AG04449 (cell line): ENCODE measurements at regions of chr14 and their contacts with region 1.

Region 1: GRCh38 chr14:22986508-22987054 is 4.2 kb upstream of the AJUBA start:
- DNase-seq: peak; percentile 49
- H3K4me3 ChIP-seq: no peak overlapping the region
- CTCF ChIP-seq: peak; percentile 79

Region 2: DNA sequence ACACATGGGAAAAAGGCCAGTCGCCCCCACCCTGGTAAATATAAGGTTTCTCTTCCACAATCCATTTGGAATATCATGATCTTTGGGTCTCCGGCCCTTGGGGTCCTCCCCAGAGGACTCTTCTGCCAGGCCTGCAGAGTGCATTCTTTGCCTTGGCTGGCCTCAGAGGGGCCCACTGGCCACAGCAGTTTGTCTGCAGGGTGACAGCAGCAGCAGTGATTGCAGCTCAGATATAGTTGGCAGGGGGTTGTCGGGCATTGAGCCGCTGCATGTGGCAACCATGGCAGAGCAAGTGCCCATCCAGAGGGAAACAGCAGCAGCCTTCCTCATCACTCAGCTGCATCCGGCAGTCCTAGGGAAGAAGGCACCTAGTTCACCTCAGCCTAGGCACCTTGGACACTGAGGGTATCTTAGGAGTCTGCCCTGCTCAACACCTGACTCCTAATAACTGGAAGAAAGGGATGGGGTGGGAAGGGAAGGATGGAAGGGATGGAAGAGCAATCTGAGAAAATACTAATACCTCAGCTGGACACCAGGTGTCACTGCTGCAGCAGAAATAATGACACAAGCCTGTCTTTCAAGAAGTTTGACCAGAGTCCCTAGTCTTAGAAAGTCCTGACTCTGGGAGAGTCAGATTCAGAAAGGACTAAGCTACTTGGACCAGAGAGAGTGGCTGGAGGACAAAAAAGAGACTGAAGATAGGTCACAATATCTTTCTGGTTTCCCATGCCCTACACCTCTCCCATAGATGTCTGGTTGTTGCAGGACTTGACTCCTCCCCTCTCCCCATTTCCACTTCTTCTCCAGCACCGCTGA is 13.2 kb before region 1 on chr14:
- CTCF ChIA-PET with region 1: interaction called, 241 read pairs
- POLR2A ChIA-PET with region 1: interaction called, 10 read pairs
- DNase-seq: no peak
- H3K4me3 ChIP-seq: no peak overlapping the region
- CTCF ChIP-seq: peak; percentile 52

Region 3: DNA sequence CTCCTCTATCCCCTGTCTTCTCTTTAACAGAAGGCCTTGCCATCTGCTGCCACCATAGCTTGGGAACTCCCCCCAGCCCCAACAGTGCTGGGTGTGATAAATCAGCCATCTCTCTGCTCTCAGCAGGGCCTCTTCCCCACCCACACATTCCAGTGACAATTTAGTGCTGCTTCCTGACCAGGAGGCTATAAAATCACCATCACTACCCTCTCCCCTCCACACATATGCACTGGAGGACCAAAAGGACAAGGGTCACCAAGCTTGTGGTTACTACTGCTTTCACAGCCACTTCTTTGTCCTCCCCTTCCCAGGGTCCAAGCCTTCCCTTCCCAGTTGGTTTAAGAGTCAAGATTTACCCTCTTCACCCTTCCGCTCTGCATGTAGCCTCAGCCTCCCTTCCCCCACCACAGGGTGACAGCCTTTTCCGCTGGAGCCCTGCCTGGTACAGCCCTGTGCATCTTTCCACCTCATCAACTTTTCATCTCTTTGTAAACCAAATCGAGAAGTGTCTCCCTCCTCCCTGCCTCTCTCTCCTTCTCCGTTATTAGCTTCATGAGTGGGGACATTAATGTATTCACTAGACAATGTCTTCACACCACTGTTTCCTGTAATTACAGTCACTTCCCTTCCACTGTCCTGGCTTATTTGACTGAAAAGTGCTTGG is 38.7 kb after region 1 on chr14:
- CTCF ChIA-PET with region 1: interaction called, 17 read pairs
- POLR2A ChIA-PET with region 1: no interaction called
- DNase-seq: no peak
- H3K4me3 ChIP-seq: no peak overlapping the region
- CTCF ChIP-seq: no peak

Region 4: DNA sequence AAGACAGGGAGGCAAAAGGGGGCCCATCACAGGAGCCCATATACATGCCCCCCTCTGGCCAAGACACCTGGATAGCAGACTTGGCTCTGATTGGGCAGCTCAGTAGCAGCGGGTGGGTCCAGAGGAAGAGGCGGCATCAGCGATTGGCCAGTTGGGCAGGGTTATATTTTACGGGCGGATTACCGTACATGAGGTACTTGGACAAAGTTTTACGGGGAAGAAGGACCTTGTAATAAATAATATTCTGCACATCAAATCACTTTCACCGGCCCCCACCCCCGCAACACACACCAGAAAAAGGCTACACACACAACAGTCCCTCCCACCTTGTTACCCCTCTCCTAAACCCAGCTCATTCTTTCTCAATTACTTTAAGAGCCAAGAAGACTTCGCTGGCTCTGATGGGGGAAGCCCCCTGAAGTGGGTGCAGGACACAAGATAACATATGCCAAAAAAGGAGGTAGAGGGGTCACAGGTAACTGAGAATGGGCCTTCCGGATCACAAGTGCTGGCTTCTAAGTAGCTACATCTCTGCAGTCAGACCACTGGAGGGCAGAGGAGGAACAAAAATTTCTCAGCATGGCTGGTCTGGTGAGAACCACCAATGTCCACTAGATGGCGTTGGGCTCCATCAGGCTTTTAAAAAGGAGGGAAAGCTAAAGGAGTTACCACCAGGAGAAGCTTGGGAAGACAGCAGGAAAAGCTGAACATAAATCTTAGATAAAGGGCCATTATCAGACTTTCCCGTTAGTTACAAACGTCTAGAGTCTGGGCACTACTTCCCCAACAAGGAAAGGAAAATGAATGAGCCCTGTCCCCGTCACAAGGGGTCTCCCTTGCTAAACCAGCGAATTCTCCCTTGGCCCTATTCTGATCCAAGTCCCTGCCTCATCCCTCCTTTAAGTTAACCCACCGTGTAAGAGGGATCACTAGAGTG is 82.2 kb after region 1 on chr14:
- CTCF ChIA-PET with region 1: interaction called, 1,423 read pairs
- POLR2A ChIA-PET with region 1: interaction called, 3 read pairs
- DNase-seq: peak; percentile 61
- H3K4me3 ChIP-seq: peak overlapping the region; percentile 39
- CTCF ChIP-seq: peak; percentile 92

Region 5: GRCh38 chr14:23104591-23105347 is 118.2 kb after region 1 on chr14 and contains the start of gene CIROP:
- CTCF ChIA-PET with region 1: interaction called, 152 read pairs
- POLR2A ChIA-PET with region 1: no interaction called
- DNase-seq: no peak
- H3K4me3 ChIP-seq: no peak within 1 kb of the TSS
- CTCF ChIP-seq: no peak

Region 6: DNA sequence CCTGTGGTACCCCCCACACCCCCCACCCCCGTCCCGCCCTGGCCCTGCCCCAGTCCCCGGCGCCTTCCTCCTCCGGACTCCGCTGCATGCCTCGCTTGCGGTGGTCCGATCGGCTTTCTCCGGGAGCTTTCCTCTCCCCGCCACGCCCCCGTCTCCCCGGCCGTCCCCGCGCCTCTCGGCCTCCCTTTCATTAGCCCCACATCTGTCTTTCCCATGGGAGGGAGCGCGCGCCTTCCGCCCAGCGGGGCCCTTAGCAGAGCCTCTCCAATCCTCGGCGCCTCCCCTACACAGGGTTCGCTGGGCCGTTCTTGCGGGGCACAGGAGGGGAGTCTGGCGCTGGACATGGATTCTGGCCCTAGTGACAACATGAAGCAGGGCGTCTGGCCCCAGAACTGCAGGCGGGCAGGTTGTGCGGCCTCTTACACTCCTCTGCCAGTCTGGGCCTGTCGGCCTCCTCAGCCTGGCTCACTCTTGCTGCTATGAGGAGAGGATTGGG is 379.9 kb after region 1 on chr14:
- CTCF ChIA-PET with region 1: no interaction called
- POLR2A ChIA-PET with region 1: no interaction called
- DNase-seq: no peak
- H3K4me3 ChIP-seq: peak overlapping the region; percentile 74
- CTCF ChIP-seq: no peak